ENCODE measurements at regions of chr6 and their contacts with region 1.

Region 1: DNA sequence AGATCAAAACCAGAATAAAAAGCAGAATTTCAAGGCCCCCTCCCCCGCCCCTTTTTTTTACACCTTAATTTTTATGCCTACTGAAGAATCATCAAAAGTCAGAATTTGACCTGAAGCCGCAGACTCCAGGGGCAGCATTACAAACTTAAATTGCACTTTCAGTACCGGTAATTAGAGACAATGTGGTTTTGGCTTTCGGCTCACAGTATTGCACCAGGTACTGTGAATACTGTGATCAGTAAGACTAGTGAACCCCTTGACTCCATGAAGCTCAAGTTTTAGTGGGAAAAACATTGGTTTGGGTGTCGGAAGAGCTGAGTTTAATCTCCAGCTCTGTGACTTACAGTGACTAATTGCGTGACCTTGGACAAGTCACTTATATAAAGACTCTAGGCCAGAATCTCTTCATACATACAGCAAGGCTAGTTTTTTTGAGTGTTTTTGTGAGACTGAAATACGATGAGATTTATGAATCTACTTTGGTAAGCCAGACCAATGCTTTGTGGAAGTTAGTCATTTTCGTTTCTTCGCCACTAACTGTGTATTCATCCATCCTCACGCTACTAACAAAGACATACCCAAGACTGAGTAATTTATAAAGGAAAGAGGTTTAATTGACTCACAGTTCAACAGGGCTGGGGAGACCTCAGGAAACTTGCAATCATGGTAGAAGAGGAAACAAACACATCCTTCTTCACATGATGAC is 114.7 kb downstream of the SASH1 start:
- DNase-seq: no peak
- H3K4me3 Mint-ChIP-seq: no peak overlapping the region
- H3K27ac Mint-ChIP-seq: peak overlapping the region; percentile 33
- H3K4me1 Mint-ChIP-seq: peaks cover 8% of the 10 kb centered on the region
- H3K27me3 Mint-ChIP-seq: no peaks in the 10 kb centered on the region

Region 2: DNA sequence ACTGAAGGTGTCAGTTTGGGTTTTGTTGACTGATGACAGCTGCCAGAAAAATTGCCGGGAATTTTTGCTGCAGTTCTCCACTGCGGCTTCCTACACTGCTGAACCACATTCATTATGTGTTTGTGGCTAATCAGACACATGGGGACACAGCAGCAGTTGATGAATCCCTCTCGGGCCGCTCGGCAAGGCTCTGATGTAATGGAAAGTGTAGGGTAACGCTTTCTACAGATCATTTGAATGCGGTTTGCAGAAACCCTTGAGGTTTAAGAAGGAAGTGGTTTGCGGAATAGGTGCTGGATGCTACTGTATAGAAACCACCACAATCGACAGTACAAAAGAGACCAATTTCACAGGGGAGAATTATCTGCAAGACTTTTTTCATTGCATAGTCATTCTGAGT is 253.3 kb before region 1 on chr6:
- CTCF ChIA-PET with region 1: no interaction called
- POLR2A ChIA-PET with region 1: no interaction called
- intact Hi-C with region 1: loop called (anchors 1 kb)
- DNase-seq: peak; percentile 80
- H3K4me3 Mint-ChIP-seq: peak overlapping the region; percentile 55
- H3K27ac Mint-ChIP-seq: peak overlapping the region; percentile 72
- H3K4me1 Mint-ChIP-seq: peaks cover 35% of the 10 kb centered on the region
- H3K27me3 Mint-ChIP-seq: peaks cover 69% of the 10 kb centered on the region

Measured in activated CD4-positive, alpha-beta memory T cell treated with anti-CD3 and anti-CD28 coated beads for 36 hours (primary cell).